T-cell (primary cell): ENCODE measurements at regions of chr22 and their contacts with region 1.

Region 1: DNA sequence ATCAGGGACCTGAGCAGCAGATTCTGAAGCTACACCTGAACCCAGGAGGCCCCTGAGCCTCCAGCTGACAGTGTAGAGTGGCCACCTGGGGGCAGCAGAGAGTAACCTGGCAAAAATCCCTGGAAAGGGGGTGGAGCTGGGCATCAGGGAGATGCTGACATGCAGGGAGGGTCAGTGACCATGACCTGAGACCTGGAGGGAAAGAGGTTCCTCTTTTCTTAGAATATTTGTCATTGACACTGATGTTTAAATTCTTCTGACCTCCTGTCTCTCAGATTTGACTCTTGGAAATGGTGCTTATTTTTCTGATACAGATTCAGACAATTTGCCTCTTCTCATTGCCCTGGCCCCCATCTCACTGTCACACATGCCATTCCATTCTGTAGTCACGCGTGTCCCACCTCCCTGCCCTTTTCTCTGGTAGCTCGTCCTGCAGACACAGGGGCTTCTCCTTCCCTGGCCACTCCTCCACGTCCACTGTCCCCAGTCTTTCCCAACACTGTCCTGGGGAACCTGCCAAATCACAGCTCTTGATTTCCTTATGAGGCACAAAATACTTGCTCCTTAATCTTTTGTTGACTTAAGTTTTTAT is 117.2 kb upstream of the IGLL5 start:
- DNase-seq: peak in 22 of 35 experiments; percentile 11 to 67 (median 34)
- ATAC-seq: peak; percentile 36 to 55 (median 44)
- H3K4me3 ChIP-seq: no peak overlapping the region
- H3K4me3 Mint-ChIP-seq: no peak overlapping the region
- H3K27ac ChIP-seq: no peak overlapping the region
- H3K27ac Mint-ChIP-seq: peak overlapping the region; percentile 29 to 48
- H3K4me1 ChIP-seq: peaks cover 0 to 65% of the 10 kb centered on the region in 2 experiments
- H3K4me1 Mint-ChIP-seq: peaks cover 6 to 15% (median 8%) of the 10 kb centered on the region in 3 donors
- H3K27me3 ChIP-seq: no peaks in the 10 kb centered on the region
- H3K27me3 Mint-ChIP-seq: peaks cover 8 to 16% of the 10 kb centered on the region in 2 donors

Region 2: DNA sequence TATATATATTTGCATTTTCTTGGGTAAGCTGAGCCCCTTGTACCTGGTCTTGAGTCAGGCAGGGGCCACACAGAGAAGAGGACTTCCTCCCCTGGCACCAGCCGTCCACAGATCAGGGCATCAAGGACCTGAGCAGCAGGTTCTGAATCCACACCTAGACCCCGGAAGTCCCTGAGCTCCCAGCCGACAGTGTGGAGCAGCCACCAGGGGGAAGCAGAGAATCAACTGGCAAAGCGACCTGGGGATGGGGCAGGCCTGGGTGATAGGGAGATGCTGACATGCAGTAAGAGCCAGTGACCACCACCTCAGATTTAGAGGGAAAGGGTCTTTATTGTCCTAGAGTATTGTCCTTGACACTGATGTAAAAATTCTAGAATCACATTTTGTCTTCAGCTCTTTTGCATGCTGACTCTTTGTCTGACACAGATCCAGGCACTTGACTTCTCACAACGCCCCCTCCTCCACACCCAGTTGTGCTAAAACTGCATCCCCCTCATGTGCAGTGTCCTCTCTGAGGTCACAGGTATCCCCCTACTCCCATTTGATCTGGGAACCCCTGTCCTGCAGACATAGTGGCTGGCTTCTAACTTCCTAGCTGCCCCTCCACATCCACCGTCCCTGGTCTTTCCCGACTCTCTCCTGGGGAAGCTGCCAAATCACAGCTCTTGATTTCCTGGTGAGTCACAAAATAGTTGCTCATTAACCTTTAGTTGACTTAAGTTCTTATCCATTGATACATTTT is 16.7 kb before region 1 on chr22:
- CTCF ChIA-PET with region 1: interaction called, 4 to 26 read pairs
- POLR2A ChIA-PET with region 1: no interaction called
- DNase-seq: peak; percentile 61 to 89 (median 78)
- ATAC-seq: peak; percentile 84 to 91 (median 88)
- H3K4me3 ChIP-seq: peak overlapping the region in 1 of 2 donors; percentile 3
- H3K4me3 Mint-ChIP-seq: peak overlapping the region in 2 of 3 donors; percentile 13 to 52
- H3K27ac ChIP-seq: peak overlapping the region; percentile 78
- H3K27ac Mint-ChIP-seq: peak overlapping the region; percentile 96 to 99
- H3K4me1 ChIP-seq: peaks cover 3 to 61% of the 10 kb centered on the region in 2 experiments
- H3K4me1 Mint-ChIP-seq: peaks cover 38 to 60% (median 40%) of the 10 kb centered on the region in 3 donors
- H3K27me3 ChIP-seq: no peaks in the 10 kb centered on the region
- H3K27me3 Mint-ChIP-seq: no peaks in the 10 kb centered on the region